Dorsolateral prefrontal cortex (tissue), 120 donors: ENCODE measurements at regions of chrX and their contacts with region 1.

Region 1: DNA sequence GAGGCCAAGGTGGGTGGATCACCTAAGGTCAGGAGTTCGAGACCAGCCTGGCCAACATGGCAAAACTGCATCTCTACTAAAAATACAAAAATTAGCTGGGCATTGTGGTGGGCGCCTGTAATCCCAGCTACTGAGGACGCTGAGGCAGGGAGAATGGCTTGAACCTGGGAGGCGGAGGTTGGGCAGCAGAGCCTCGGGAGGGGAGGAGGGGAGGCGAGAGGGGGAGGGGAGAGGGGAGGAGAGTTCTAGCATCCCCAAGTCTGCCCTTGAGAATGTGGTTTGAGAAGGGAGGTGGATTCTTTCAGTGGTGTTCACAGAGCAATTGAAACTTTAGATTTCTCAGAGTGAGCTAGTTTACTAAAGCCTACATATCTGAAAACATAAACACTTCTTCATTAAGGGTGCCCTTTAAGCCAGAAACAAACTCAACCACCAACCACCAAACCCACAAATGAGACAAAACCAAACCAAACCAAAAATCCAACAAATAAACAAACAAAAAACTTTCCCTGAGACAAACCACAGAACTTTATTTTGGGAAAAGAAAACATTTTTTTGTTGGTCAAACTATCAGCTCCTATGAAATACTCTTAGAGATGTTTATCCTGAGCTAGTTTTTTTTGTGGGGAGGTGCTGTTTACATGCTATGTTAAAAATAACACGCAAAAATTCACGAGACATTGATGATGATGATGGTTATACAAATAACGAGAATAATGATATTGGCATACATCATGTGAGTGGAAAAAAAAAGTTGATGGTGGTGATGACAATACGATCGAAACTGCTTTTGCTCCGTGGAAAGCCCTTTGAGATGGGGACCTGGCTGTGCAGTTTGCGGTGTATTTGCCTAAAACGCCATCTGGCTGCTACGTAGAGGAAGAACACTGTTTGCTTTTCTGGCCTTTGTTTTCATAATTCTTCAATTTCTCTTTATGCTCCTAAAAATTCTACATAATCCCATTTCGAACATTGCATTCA is 98.2 kb upstream of the PRKX start:
- DNase-seq: peak in 6 of 10 donors; percentile 22 to 51 (median 38)
- H3K4me3 ChIP-seq: peak overlapping the region in 21 of 59 donors; percentile 0 to 40 (median 30)
- H3K27ac ChIP-seq: peak overlapping the region in 9 of 59 donors; percentile 4 to 57 (median 14)
- H3K27me3 ChIP-seq: peaks cover 0 to 39% (median 12%) of the 10 kb centered on the region in 45 donors
- CTCF ChIP-seq: peak; percentile 22 to 88 (median 70)

Region 2: DNA sequence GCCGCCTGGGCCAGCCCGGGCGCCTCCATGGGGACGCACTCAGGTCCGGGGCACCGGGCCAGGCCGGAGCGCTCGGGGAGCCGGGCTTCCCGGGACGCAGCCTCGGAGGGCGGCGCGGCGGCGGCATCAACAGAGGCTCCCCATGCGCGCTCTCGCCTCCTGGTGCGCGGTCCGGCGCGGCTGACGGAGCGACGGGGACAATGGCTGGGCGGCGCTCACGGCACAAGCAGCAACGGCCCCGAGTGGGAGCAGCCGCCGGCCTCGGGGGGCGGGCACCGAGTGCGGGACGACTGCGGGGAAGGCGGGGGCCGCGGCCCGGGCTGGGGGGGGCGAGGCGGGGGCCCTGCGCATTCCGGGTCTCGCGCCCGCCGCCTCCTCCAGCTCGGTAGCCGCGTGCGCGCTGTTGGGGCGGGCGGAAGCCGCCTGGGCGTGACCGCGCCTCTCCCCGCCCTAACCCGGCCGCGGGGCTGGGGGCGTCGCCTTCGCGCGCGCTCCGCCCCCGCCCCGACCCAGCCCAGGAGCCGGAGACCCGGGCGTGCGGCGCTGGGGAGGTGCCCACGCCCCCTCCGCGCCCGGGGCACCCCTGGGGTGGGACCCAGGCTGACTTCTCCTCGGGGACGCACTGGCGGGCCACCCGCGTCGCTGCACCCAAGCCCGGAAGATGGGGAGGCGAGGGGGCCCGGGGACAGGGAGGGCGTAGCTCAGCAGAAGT is 98.2 kb before region 1 on chrX and contains the start of gene PRKX:
- intact Hi-C with region 1: loop called in 1 of 2 experiments (anchors 5 kb)
- DNase-seq: peak in 4 of 10 donors; percentile 22 to 52 (median 40)
- H3K4me3 ChIP-seq: peak within 1 kb of the TSS; percentile 24 to 78 (median 63)
- H3K27ac ChIP-seq: peak within 1 kb of the TSS in 49 of 59 donors; percentile 16 to 79 (median 61)
- H3K27me3 ChIP-seq: peaks cover 0 to 70% (median 18%) of the 10 kb centered on the region in 45 donors
- CTCF ChIP-seq: peak in 1 of 56 donors; percentile 23
- total RNA-seq, gene PRKX: 5.5 to 38.7 (median 13.9) TPM